Adrenal gland (tissue), 19 donors: ENCODE measurements at regions of chr14 and their contacts with region 1.

Region 1: DNA sequence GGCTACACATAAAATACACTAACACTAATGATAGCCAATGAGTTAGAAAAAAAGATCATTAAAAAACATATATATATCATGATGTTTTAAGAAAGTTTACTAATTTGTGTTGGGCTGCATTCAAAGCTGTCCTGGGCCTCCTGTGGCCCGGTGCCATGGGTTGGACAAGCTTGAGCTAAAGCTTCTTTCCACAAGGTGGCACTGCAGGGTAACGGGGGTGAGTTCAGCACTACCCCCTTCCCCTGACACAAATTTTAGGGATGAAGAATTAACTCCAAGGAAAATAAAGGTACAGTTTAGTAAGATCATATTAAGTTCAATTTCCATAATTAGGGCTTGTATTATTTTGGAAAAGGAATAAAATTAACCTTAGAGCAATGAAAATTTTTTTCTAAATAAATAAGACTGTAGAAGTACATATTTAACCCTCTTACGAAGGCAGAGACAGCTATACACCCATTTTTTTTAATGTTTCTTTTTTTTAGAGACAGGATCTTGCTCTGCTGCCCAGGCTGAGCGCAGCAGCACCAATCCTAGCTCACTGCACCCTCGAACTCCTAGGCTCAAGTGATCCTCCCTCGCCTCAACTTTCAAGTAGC is 38.9 kb downstream of the PPP1R13B start:
- DNase-seq: peak; percentile 80 to 89 (median 87)
- H3K4me3 ChIP-seq: no peak overlapping the region
- H3K27ac ChIP-seq: no peak overlapping the region
- H3K4me1 ChIP-seq: peaks cover 0 to 5% of the 10 kb centered on the region in 2 donors
- H3K27me3 ChIP-seq: no peaks in the 10 kb centered on the region
- CTCF ChIP-seq: peak; percentile 81 to 92 (median 89)
- POLR2A ChIP-seq: no peak

Region 2: DNA sequence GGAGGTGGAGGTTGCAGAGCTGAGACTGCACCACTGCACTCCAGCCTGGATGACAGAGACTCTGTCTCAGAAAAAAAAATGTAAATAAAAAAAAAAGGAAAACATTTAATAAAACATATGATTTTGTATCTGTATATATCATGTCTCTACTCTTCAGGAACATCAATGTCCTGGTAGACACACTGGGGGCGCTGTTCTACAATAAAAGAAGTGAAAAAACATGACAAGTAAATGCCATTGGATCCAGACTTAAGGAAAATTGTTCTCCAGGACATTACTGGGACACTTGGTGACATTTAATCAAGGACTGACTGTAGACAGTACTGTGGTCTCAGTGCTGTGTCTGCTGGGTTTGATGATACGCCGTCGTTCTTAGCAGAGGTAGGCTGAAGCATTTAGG is 195.0 kb before region 1 on chr14:
- intact Hi-C with region 1: no loop called
- DNase-seq: peak in 1 of 7 donors; percentile 31
- H3K4me3 ChIP-seq: no peak overlapping the region
- H3K27ac ChIP-seq: no peak overlapping the region
- H3K4me1 ChIP-seq: no peaks in the 10 kb centered on the region
- H3K27me3 ChIP-seq: no peaks in the 10 kb centered on the region
- CTCF ChIP-seq: peak in 3 of 6 experiments; percentile 42 to 49 (median 46)
- POLR2A ChIP-seq: no peak

Region 3: GRCh38 chr14:103641181-103641580 is 167.3 kb before region 1 on chr14:
- intact Hi-C with region 1: no loop called
- DNase-seq: peak in 3 of 7 donors; percentile 38 to 44 (median 39)
- H3K4me3 ChIP-seq: no peak overlapping the region
- H3K27ac ChIP-seq: peak overlapping the region in 3 of 5 donors; percentile 0 to 60 (median 60)
- H3K4me1 ChIP-seq: peaks cover 11 to 31% of the 10 kb centered on the region in 2 donors
- H3K27me3 ChIP-seq: no peaks in the 10 kb centered on the region
- CTCF ChIP-seq: no peak
- POLR2A ChIP-seq: no peak

Region 4: GRCh38 chr14:103847451-103848188 is 39.1 kb after region 1 on chr14 and contains the start of gene PPP1R13B:
- intact Hi-C with region 1: loop called in 1 of 2 experiments (anchors 5 kb)
- DNase-seq: peak; percentile 92 to 97 (median 94)
- H3K4me3 ChIP-seq: peak within 1 kb of the TSS; percentile 1 to 99 (median 28)
- H3K27ac ChIP-seq: peak within 1 kb of the TSS in 4 of 5 donors; percentile 18 to 98 (median 86)
- H3K4me1 ChIP-seq: peaks cover 16 to 28% of the 10 kb centered on the region in 2 donors
- H3K27me3 ChIP-seq: no peaks in the 10 kb centered on the region
- CTCF ChIP-seq: no peak
- POLR2A ChIP-seq: peak; percentile 63 to 82
- total RNA-seq, gene PPP1R13B: 9.6 to 42.4 (median 24.6) TPM

Region 5: GRCh38 chr14:103910262-103910935 is 101.9 kb after region 1 on chr14:
- intact Hi-C with region 1: loop called in 1 of 2 experiments (anchors 5 kb)
- DNase-seq: peak; percentile 80 to 95 (median 93)
- H3K4me3 ChIP-seq: peak overlapping the region in 1 of 4 donors; percentile 4
- H3K27ac ChIP-seq: peak overlapping the region in 1 of 5 donors; percentile 59
- H3K4me1 ChIP-seq: peaks cover 0 to 11% of the 10 kb centered on the region in 2 donors
- H3K27me3 ChIP-seq: no peaks in the 10 kb centered on the region
- CTCF ChIP-seq: peak; percentile 71 to 89 (median 86)
- POLR2A ChIP-seq: peak in 1 of 2 donors; percentile 25

Region 6: DNA sequence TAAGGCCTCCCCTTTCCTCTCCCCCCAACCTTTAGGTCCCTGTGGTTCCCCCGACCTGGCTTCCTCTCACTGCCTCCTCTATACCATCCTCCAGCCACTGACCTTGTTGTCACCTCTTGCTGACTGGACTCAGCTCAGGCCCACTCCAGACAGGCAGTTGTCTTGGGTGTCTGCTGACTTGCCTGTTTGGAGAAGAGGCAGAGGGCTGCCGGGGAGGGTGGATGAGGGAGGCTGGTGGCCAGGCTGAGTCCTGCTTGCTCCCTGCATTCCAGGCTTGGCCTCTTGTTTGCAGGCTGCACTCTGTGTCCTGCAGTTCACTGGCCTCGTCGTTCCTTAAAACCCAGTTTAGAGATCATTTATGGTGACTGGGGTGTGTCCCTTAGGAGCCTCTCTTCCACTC is 164.9 kb after region 1 on chr14:
- intact Hi-C with region 1: loop called in 1 of 2 experiments (anchors 5 kb)
- DNase-seq: peak in 6 of 7 donors; percentile 16 to 58 (median 26)
- H3K4me3 ChIP-seq: no peak overlapping the region
- H3K27ac ChIP-seq: no peak overlapping the region
- H3K4me1 ChIP-seq: no peaks in the 10 kb centered on the region
- H3K27me3 ChIP-seq: no peaks in the 10 kb centered on the region
- CTCF ChIP-seq: no peak
- POLR2A ChIP-seq: no peak

Region 7: DNA sequence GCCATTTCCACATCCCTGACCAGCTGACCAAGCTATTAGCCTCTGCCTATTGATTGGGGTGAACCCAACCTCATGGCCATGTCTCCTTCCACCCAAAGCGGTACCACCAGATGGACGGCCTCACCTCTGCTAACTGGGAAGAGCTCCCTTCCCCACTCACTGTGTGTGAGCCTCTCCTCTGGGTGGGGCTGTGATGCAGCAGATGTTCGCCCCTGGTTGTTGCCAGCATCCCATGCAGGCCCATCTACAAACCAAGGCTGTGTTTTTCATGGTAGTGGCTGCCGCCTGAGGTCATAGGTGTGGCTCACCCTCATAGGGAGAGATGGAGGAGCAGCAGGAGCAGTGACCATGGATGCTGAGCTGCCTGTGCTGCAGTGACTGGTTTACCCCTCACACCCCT is 181.5 kb after region 1 on chr14:
- intact Hi-C with region 1: loop called in 1 of 2 experiments (anchors 10 kb)
- DNase-seq: no peak
- H3K4me3 ChIP-seq: no peak overlapping the region
- H3K27ac ChIP-seq: no peak overlapping the region
- H3K4me1 ChIP-seq: no peaks in the 10 kb centered on the region
- H3K27me3 ChIP-seq: no peaks in the 10 kb centered on the region
- CTCF ChIP-seq: no peak
- POLR2A ChIP-seq: no peak